ENCODE measurements at regions of chr2 and their contacts with region 1.

Region 1: DNA sequence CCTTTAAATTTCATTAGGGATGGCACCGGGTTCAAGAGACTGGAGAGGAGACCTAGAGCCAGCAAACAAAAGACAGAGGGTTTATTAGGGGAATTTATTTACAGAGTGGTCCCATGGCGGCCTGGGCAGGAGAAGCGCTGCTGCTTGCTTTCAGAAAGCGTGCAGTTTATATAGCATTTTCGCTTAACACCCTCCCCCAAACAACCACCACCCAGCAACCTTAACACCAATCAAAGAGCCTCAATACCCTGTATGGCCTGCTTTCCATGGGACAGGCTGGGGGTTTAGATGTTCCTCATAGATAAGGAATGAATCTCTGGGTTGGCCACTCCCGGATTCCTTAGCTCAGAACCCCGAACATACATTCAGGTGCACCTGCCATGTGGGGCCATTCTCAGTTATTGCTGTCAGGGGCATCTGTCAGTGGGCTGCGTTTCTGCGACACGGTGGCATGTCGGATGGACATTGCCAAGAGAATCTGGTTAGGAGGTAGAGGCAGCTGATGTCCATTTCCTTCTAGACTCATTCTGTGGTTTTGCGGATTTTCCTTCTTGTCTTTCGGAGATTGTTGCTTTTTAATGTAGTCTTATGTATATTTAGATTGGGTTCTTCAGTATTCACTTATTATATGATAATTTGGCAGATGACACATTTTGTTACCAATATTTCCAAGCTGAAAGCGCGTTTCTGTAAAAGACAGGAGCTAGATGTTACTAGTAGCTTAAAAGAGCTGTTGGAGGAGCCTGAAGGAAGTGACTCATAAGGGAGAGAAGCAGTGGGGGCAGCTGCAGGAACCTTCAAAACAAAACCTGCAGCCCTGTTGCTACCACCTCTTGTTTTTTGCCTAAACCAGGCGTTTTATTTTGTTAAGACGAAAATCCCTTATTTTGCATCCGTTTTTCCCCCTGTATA is 7.2 kb downstream of the AGAP1 start:
- DNase-seq: peak; percentile 21
- H3K4me3 Mint-ChIP-seq: peak overlapping the region; percentile 48
- H3K27ac Mint-ChIP-seq: peak overlapping the region; percentile 31
- H3K4me1 Mint-ChIP-seq: peaks cover 55% of the 10 kb centered on the region
- H3K27me3 Mint-ChIP-seq: no peaks in the 10 kb centered on the region
- CTCF ChIP-seq: no peak

Region 2: GRCh38 chr2:235511187-235511661 is 10.2 kb after region 1 on chr2:
- CTCF ChIA-PET with region 1: interaction called, 11 read pairs
- intact Hi-C with region 1: no loop called
- DNase-seq: peak; percentile 70
- H3K4me3 Mint-ChIP-seq: no peak overlapping the region
- H3K27ac Mint-ChIP-seq: no peak overlapping the region
- H3K4me1 Mint-ChIP-seq: peaks cover 48% of the 10 kb centered on the region
- H3K27me3 Mint-ChIP-seq: no peaks in the 10 kb centered on the region
- CTCF ChIP-seq: no peak

Region 3: GRCh38 chr2:235551965-235552364 is 50.9 kb after region 1 on chr2:
- CTCF ChIA-PET with region 1: interaction called, 6 read pairs
- intact Hi-C with region 1: loop called (anchors 2 kb)
- DNase-seq: peak; percentile 76
- H3K4me3 Mint-ChIP-seq: peak overlapping the region; percentile 43
- H3K27ac Mint-ChIP-seq: peak overlapping the region; percentile 60
- H3K4me1 Mint-ChIP-seq: peaks cover 61% of the 10 kb centered on the region
- H3K27me3 Mint-ChIP-seq: no peaks in the 10 kb centered on the region
- CTCF ChIP-seq: peak; percentile 55

Measured in Calu3 (cell line).